H1 (cell line): ENCODE measurements at regions of chr4 and their contacts with region 1.

Region 1: GRCh38 chr4:38069271-38069760 is 109.1 kb downstream of the PTTG2 start:
- DNase-seq: no peak
- H3K4me3 ChIP-seq: no peak overlapping the region
- H3K27ac ChIP-seq: no peak overlapping the region
- H3K4me1 ChIP-seq: peaks cover 0 to 2% (median 0%) of the 10 kb centered on the region in 4 experiments; a peak in 1 of 7 replicates
- H3K27me3 ChIP-seq: no peaks in the 10 kb centered on the region
- CTCF ChIP-seq: peak; percentile 64 to 89 (median 74)
- EP300 ChIP-seq: no peak
- POLR2A ChIP-seq: no peak
- RAD21 ChIP-seq: peak; percentile 89 to 92

Region 2: GRCh38 chr4:38055566-38055965 is 13.8 kb before region 1 on chr4:
- CTCF ChIA-PET with region 1: interaction called, 16 read pairs
- POLR2A ChIA-PET with region 1: no interaction called
- DNase-seq: no peak
- H3K4me3 ChIP-seq: no peak overlapping the region
- H3K27ac ChIP-seq: no peak overlapping the region
- H3K4me1 ChIP-seq: no peaks in the 10 kb centered on the region
- H3K27me3 ChIP-seq: no peaks in the 10 kb centered on the region
- CTCF ChIP-seq: peak in 2 of 3 experiments; percentile 9 to 33; a peak in 2 of 4 replicates
- EP300 ChIP-seq: no peak
- POLR2A ChIP-seq: no peak
- RAD21 ChIP-seq: peak; percentile 7 to 25; a peak in 2 of 4 replicates

Region 3: DNA sequence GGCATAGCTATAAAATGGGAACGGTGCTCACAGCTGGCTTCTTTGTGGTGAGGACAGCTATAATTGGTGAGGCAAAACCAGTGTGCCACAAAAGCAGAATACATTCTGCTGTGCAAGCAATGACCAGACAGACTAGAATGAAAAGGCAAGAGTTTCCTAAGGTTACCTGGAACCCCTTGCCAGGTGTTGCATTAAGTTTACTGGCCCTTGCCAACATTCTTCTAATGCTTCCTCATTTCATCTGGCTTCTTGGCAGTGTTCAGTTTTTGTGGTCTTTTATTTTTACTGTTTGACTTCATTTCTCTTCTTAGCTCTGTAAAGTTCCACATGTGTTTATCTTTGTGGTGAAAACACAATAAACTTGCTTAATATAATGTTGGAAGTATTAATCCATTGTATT is 22.3 kb after region 1 on chr4:
- CTCF ChIA-PET with region 1: interaction called, 25 read pairs
- POLR2A ChIA-PET with region 1: no interaction called
- DNase-seq: no peak
- H3K4me3 ChIP-seq: no peak overlapping the region
- H3K27ac ChIP-seq: no peak overlapping the region
- H3K4me1 ChIP-seq: peaks cover 0 to 14% (median 6%) of the 10 kb centered on the region in 4 experiments; a peak in 6 of 7 replicates
- H3K27me3 ChIP-seq: no peaks in the 10 kb centered on the region
- CTCF ChIP-seq: no peak
- EP300 ChIP-seq: no peak
- POLR2A ChIP-seq: no peak
- RAD21 ChIP-seq: no peak

Region 4: DNA sequence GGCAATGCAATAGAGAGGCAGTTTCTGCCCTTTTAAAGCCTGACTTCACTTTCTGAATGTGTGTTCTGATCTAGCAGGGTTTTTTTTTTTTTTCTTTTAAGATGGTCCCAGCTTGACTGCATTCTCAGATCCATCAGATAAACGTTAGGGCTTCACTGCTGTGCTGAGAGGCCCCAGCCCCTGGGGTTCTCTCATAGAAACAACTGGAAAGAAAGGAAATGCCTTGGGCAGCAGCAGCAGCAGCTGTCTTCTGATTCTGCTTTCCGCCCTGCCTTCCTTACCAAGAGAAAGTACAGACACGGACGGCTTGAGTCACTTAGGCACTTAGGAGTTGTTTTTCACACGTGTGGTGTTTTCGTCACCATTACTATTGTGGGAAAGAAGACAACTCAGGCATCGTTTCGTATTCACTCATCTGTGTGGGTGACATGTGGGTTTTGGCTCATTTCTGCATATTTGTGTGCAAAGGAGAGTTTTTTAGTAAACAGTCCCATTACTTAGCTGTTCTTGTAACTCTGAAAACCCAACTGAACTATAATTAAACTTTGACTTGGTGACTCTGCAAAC is 62.9 kb after region 1 on chr4:
- CTCF ChIA-PET with region 1: interaction called, 49 read pairs
- POLR2A ChIA-PET with region 1: no interaction called
- DNase-seq: no peak
- H3K4me3 ChIP-seq: no peak overlapping the region
- H3K27ac ChIP-seq: no peak overlapping the region
- H3K4me1 ChIP-seq: peaks cover 11 to 30% (median 14%) of the 10 kb centered on the region in 4 experiments; a peak in 6 of 7 replicates
- H3K27me3 ChIP-seq: peaks cover 0 to 31% (median 25%) of the 10 kb centered on the region in 4 experiments; a peak in 6 of 7 replicates
- CTCF ChIP-seq: no peak
- EP300 ChIP-seq: no peak
- POLR2A ChIP-seq: no peak
- RAD21 ChIP-seq: no peak

Region 5: DNA sequence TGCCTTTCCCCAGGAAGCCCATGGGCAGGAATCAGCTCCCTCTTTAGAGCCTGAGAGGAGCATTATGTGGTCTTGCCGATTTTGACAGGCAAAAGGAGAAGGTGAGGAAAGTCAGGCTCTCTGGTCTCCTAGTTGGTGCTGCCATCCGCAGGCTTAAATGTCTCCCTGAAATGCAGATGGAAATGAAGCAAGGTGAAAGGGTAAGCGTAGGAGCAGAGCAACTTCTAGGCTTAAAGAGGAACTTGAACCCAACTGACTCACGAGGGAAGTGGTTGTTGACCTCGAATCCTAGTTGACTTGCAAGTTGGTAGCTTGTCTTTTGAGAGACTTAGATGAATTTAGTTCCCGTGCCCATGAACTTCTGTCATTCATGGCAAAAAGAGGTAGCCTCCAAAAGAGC is 96.8 kb after region 1 on chr4:
- CTCF ChIA-PET with region 1: interaction called, 29 read pairs
- POLR2A ChIA-PET with region 1: no interaction called
- DNase-seq: no peak
- H3K4me3 ChIP-seq: no peak overlapping the region
- H3K27ac ChIP-seq: no peak overlapping the region
- H3K4me1 ChIP-seq: peaks cover 0 to under 1% (median 0%) of the 10 kb centered on the region in 4 experiments; a peak in 1 of 7 replicates
- H3K27me3 ChIP-seq: peaks cover 0 to 2% (median under 1%) of the 10 kb centered on the region in 4 experiments; a peak in 2 of 7 replicates
- CTCF ChIP-seq: peak; percentile 30 to 67 (median 58)
- EP300 ChIP-seq: no peak
- POLR2A ChIP-seq: no peak
- RAD21 ChIP-seq: peak; percentile 78 to 86

Region 6: DNA sequence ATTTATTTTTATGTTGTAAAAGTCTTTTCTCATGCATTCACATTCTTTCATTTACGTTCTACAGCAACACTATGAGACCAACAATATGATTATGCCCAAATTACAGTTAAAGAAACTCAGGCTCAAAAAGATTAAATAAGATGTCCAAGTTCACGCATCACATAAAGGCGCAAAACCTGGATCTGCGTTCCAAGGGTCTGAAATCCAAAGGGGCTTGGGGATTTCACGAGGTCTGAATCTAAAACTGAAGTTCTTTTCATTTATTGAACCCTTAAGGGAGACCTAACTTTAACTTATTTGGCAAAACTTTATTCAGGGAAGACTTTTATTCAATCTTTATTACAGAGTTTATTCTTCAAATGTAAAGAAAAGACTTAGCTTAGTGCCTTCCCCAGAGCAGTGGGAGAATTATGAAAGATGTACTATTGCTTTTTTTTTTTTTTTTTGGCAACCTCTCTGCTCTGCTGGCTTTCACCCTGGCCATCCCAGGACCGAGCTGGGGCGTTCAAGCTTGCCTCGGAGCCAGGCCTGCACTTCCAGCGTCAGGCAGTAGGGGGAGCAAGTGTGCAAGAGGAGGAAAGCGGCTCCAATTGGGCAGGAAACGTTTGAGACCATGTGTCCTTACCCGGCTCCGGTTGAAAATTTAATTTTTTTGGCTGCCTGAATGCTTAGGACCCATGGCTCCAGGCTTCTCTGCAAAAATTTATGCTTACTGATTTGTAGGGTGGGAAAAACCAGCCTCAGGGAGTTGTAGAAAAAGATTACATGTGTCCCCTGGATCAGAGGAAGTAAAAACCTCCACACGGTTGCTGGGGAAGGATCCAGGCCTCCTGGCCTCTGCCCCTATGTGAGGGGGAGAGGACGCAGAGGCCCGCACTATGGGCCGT is 250.4 kb after region 1 on chr4:
- CTCF ChIA-PET with region 1: interaction called, 14 read pairs
- POLR2A ChIA-PET with region 1: no interaction called
- DNase-seq: peak; percentile 76 to 100
- H3K4me3 ChIP-seq: no peak overlapping the region; a peak in 1 of 8 replicates
- H3K27ac ChIP-seq: no peak overlapping the region
- H3K4me1 ChIP-seq: peaks cover 0 to 3% (median under 1%) of the 10 kb centered on the region in 4 experiments; a peak in 1 of 7 replicates
- H3K27me3 ChIP-seq: no peaks in the 10 kb centered on the region
- CTCF ChIP-seq: peak; percentile 86 to 94 (median 94)
- EP300 ChIP-seq: no peak
- POLR2A ChIP-seq: no peak
- RAD21 ChIP-seq: peak; percentile 91 to 92